K562 (cell line): ENCODE measurements at regions of chr17 and their contacts with region 1.

Region 1: DNA sequence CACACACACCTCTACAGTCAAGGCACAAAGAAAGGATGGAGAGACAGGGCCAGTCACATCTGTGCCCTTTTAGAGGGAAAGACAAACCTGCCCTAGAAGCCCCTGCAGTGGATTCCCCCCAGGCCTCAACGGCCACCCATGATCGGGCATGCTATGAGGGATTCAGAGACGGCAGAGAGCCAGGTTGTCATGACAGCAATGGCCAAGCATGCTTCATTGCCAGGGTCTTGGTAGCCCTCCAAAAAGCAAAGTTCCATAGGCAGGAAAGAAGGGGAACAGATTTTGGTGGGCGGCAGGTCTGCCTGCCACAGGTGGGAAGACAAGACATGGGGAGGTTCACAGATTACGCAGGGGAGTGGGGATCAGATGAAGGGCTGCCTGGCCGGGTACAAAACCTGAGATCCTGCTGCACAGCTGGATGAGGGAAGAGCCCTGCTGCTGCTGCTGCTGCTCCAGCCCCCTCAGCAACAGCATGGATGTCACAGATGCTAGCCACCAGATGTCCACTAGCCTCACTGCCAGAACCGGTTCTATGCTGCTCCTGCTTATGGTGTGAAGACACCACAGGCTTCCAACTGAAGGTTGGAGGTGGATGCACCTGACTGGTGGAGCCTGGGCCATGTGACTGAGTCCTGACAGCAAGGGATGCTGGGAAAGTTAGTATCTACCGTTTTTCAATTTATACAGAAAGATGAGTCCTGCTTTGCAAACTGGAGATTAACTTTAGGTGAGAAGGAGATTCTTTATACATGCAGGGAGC is 17.8 kb downstream of the ACTG1 start:
- DNase-seq: peak in 1 of 4 experiments; percentile 40
- ATAC-seq: peak; percentile 74
- H3K4me3 ChIP-seq: no peak overlapping the region
- H3K27ac ChIP-seq: no peak overlapping the region
- H3K4me1 ChIP-seq: peaks cover 3 to 35% of the 10 kb centered on the region in 2 experiments; a peak in 4 of 5 replicates
- H3K27me3 ChIP-seq: peaks cover 4 to 11% of the 10 kb centered on the region in 2 experiments; a peak in 3 of 5 replicates
- CTCF ChIP-seq: no peak
- EP300 ChIP-seq: no peak
- POLR2A ChIP-seq: no peak
- RAD21 ChIP-seq: no peak

Region 2: DNA sequence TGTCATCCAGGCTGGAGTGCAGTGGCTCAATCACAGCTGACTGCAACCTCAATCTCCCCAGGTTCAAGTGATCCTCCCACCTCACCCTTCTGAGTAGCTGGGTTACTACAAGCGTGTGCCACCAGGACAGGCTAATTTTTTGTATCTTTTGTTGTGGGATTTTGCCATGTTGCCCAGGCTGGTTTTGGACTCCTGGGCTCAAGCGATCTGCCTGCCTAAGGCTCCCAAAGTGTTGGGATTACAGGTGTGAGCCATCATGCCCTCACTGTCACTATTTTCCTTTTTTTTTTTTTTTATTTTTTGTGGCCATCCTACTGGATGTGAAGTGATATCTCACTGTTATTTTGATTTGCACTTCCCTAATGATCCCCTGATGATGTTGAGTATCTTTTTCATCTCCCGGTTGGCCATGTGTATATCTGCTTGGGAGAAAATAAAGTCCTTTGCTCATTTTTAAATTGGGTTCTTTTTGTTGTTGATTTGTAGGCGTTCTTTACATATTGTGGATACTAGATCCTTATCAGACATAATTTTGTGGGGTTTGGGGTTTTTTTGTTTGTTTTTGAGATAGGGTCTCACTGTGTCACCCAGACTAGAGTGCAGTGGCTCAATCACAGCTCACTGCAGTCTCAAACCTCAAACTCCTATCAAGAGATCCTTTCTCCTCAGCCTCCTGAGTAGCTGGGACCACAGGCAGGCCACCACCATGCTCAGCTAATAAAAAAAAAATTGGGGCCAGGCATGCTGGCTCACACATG is 12.8 kb after region 1 on chr17:
- CTCF ChIA-PET with region 1: no interaction called
- POLR2A ChIA-PET with region 1: interaction called, 132 read pairs
- in situ Hi-C with region 1: no loop called
- intact Hi-C with region 1: no loop called
- DNase-seq: no peak
- ATAC-seq: no peak
- H3K4me3 ChIP-seq: no peak overlapping the region
- H3K27ac ChIP-seq: no peak overlapping the region
- H3K4me1 ChIP-seq: peaks cover 25 to 27% of the 10 kb centered on the region in 2 experiments; a peak in 4 of 5 replicates
- H3K27me3 ChIP-seq: peaks cover 1 to 11% of the 10 kb centered on the region in 2 experiments; a peak in 3 of 5 replicates
- CTCF ChIP-seq: no peak
- EP300 ChIP-seq: no peak
- POLR2A ChIP-seq: no peak; the same call in 1 of the 2 replicates
- RAD21 ChIP-seq: no peak

Region 3: DNA sequence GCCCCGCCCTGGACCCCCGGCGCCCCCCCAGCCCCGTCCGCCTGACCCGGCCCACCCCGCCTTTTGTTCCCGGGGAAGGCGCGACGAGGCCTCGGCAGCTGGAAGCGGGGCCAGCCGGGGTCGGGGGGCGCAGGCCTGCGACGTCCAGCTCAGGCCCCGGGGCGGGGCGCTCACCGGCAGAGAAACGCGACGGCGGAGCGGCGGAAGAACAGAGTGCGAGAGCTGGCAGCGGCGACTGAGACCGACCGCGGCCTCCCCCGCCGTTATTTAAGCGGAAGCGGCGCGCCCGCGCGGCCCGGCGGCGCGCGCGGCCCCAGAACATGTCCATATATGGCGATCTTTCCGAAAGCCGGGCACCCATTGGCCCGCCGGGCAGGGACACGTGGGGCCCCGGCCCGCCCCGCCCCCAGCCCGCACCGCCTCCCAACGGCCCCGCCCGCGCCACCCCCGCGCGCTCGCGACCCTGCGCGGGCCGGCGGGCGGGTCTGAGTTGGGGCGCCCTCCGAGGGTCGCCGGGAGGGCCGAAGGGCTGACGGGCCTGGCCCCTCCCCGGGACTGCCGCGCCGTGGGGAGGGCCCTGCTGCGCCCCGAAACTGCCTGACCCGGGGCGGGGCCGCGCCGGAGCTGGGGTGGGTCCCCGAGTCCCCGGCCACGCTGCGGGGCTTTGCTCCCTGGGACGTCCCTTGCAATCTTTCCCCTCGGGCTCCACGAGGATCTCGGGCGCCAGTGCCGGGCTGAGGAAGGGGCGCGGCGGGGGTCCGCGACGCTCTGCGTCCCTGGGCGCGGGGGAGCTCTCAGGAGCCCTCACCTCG is 18.0 kb after region 1 on chr17 and contains the start of gene ACTG1:
- CTCF ChIA-PET with region 1: no interaction called
- POLR2A ChIA-PET with region 1: interaction called, 132 read pairs
- in situ Hi-C with region 1: no loop called
- intact Hi-C with region 1: no loop called
- DNase-seq: peak; percentile 93 to 97 (median 96)
- ATAC-seq: peak; percentile 75
- H3K4me3 ChIP-seq: peak within 1 kb of the TSS; percentile 86
- H3K27ac ChIP-seq: peak within 1 kb of the TSS; percentile 96
- H3K4me1 ChIP-seq: peaks cover 35 to 66% of the 10 kb centered on the region in 2 experiments; a peak in 4 of 5 replicates
- H3K27me3 ChIP-seq: no peaks in the 10 kb centered on the region
- CTCF ChIP-seq: no peak
- EP300 ChIP-seq: peak; percentile 31
- POLR2A ChIP-seq: peak; percentile 98
- RAD21 ChIP-seq: no peak
- polyA plus RNA-seq, gene ACTG1: 259 to 386 TPM

Region 4: DNA sequence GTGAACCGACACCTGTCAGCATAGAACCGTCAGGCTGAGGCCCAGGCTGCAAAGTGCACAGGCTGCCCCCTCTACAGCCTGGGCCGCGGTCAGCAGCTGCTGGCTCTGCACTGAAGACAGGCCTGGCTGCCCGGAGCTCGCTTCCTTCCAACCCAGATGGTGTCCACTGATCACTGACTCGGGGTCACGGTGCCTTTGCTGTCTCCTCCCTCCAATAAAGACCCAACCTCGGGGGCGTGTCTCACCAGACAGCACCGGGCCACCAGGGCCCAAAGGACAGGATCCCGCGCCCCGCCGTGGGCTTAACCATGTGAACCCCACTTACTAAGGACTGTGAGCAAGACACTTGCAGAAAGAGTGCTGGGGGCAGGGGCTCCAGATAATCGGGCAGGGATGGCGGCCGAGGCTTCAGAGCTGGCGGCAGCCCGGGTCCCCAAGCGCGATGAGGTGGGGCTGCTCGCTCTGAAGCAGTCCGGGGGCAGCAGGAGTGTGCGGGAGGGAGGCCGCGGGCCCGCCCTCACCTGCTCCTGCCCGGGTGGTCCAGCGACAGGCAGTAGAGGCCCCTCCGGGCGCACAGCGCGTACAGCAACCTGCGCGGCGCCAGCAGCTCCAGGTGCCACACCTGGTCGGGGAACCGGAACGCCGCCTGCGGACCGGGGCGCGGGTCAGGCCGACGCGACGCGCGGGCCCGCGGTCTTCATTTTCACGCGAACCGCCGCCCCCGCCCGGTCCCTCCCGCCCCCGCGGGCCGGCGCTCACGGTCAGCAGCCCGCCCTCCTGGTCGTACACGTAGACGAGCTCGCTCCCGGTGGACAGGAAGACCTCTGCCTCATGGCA is 56.8 kb after region 1 on chr17:
- CTCF ChIA-PET with region 1: no interaction called
- POLR2A ChIA-PET with region 1: no interaction called
- in situ Hi-C with region 1: no loop called
- intact Hi-C with region 1: no loop called
- DNase-seq: peak; percentile 77 to 86 (median 84)
- ATAC-seq: peak; percentile 66
- H3K4me3 ChIP-seq: peak overlapping the region; percentile 97
- H3K27ac ChIP-seq: peak overlapping the region; percentile 90
- H3K4me1 ChIP-seq: peaks cover 24 to 69% of the 10 kb centered on the region in 2 experiments
- H3K27me3 ChIP-seq: no peaks in the 10 kb centered on the region
- CTCF ChIP-seq: 0 out of 6 replicates have a peak, but pooled peaks of 2 of the 3 experiments have one; percentile 1 to 18
- EP300 ChIP-seq: no peak
- POLR2A ChIP-seq: peak; percentile 59
- RAD21 ChIP-seq: no peak